ENCODE measurements at regions of chr19 and their contacts with region 1.

Region 1: GRCh38 chr19:11987405-11988281 is 22.8 kb downstream of the ZNF763 start:
- DNase-seq: peak; percentile 88 to 93
- ATAC-seq: peak; percentile 93 to 96 (median 93)
- H3K4me3 ChIP-seq: peak overlapping the region; percentile 99
- H3K4me3 Mint-ChIP-seq: peak overlapping the region; percentile 97
- H3K27ac ChIP-seq: peak overlapping the region; percentile 89
- H3K27ac Mint-ChIP-seq: peak overlapping the region; percentile 94 to 95
- H3K4me1 ChIP-seq: peaks cover 23% of the 10 kb centered on the region
- H3K4me1 Mint-ChIP-seq: peaks cover 34 to 36% of the 10 kb centered on the region in 2 donors
- H3K27me3 ChIP-seq: no peaks in the 10 kb centered on the region
- H3K27me3 Mint-ChIP-seq: no peaks in the 10 kb centered on the region
- CTCF ChIP-seq: no peak

Region 2: DNA sequence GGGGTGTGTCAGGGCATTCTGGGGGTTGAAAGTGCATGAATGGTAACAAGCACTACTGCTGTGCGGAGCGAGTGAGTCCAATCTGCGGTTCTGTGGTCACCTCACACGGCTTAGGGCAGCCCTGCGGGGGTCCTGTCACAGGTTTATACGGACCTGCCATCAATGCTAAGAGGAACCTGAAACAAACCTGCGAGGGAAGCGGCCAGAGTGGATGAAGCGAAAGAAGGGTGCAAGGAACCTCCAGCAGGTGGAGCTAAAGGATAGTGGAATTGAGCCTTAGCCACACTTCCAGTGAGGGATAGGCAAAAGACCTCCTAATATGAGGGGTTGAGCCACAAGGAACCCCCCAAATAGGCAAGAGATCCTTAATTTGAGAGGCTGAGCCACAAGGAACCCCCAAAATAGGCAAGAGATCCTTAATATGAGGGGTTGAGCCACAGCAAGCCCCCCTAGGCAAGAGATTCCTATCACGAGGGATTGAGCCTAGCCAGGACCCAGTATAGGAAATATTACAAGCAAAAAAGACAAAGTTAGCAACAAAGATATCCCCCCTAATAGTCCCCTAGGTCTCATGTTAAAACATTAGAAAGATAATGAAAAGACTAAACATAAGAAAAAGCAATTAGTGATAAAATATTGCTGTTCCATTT is 106.4 kb before region 1 on chr19:
- intact Hi-C with region 1: loop called (anchors 2 kb)
- DNase-seq: peak; percentile 43 to 84
- ATAC-seq: peak; percentile 59 to 84 (median 82)
- H3K4me3 ChIP-seq: no peak overlapping the region
- H3K4me3 Mint-ChIP-seq: no peak overlapping the region
- H3K27ac ChIP-seq: no peak overlapping the region
- H3K27ac Mint-ChIP-seq: no peak overlapping the region
- H3K4me1 ChIP-seq: peaks cover 3% of the 10 kb centered on the region
- H3K4me1 Mint-ChIP-seq: peaks cover 5 to 8% of the 10 kb centered on the region in 2 donors
- H3K27me3 ChIP-seq: no peaks in the 10 kb centered on the region
- H3K27me3 Mint-ChIP-seq: peaks cover 0 to 8% of the 10 kb centered on the region in 2 donors
- CTCF ChIP-seq: peak; percentile 73

Region 3: GRCh38 chr19:11964858-11965645 is 22.6 kb before region 1 on chr19 and contains the start of gene ZNF763:
- intact Hi-C with region 1: loop called (anchors 1 kb)
- DNase-seq: peak; percentile 90 to 92
- ATAC-seq: peak; percentile 89 to 94 (median 90)
- H3K4me3 ChIP-seq: peak within 1 kb of the TSS; percentile 86
- H3K4me3 Mint-ChIP-seq: peak within 1 kb of the TSS; percentile 90
- H3K27ac ChIP-seq: peak within 1 kb of the TSS; percentile 91
- H3K27ac Mint-ChIP-seq: peak within 1 kb of the TSS; percentile 95
- H3K4me1 ChIP-seq: peaks cover 18% of the 10 kb centered on the region
- H3K4me1 Mint-ChIP-seq: peaks cover 22 to 28% of the 10 kb centered on the region in 2 donors
- H3K27me3 ChIP-seq: no peaks in the 10 kb centered on the region
- H3K27me3 Mint-ChIP-seq: no peaks in the 10 kb centered on the region
- CTCF ChIP-seq: no peak
- total RNA-seq, gene ZNF763: 4.8 to 7.7 (median 5.8) TPM

Region 4: GRCh38 chr19:12015753-12016116 is 28.1 kb after region 1 on chr19:
- intact Hi-C with region 1: no loop called
- DNase-seq: no peak
- ATAC-seq: no peak
- H3K4me3 ChIP-seq: no peak overlapping the region
- H3K4me3 Mint-ChIP-seq: no peak overlapping the region
- H3K27ac ChIP-seq: no peak overlapping the region
- H3K27ac Mint-ChIP-seq: no peak overlapping the region
- H3K4me1 ChIP-seq: no peaks in the 10 kb centered on the region
- H3K4me1 Mint-ChIP-seq: no peaks in the 10 kb centered on the region
- H3K27me3 ChIP-seq: no peaks in the 10 kb centered on the region
- H3K27me3 Mint-ChIP-seq: no peaks in the 10 kb centered on the region
- CTCF ChIP-seq: no peak

Measured in natural killer cell (primary cell).